Mammary epithelial cell (primary cell): ENCODE measurements at regions of chr18 and their contacts with region 1.

Region 1: DNA sequence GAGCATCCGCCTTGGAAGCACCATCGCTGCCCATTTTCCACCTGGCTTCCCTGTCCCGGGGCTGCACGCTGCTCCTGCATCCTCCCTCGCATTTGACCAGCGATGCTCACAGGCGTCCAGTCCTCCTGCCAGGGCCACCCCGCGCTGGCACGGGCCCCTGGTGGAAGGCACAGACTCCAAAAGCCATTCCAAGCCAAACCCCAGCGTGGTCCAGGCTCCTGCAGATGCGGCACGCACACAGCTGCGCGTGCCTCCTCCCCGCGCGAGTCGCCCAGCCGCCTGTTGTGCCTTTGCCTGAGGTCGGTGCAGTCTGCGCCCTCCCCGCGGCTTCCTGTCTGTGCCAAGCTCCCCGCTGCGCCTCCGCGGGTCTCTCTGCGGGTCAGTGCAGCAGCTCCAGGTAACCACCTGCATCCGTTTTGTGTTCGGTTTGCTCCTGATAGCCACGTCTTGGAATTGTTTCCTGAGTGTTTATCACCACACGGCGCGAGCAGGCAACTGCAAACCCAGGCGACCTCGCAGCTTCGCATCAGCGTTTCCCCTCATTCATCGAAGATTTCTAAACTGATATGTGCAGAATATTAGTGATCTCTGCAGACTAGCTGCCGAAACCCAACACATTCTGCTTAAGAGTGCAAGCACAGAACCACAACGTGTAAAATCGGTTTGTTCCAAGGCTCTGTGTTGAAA is 65.2 kb upstream of the SALL3 start:
- DNase-seq: no peak
- H3K4me3 ChIP-seq: no peak overlapping the region
- H3K27ac ChIP-seq: no peak overlapping the region
- H3K4me1 ChIP-seq: no peaks in the 10 kb centered on the region
- H3K27me3 ChIP-seq: no peaks in the 10 kb centered on the region
- CTCF ChIP-seq: no peak

Region 2: DNA sequence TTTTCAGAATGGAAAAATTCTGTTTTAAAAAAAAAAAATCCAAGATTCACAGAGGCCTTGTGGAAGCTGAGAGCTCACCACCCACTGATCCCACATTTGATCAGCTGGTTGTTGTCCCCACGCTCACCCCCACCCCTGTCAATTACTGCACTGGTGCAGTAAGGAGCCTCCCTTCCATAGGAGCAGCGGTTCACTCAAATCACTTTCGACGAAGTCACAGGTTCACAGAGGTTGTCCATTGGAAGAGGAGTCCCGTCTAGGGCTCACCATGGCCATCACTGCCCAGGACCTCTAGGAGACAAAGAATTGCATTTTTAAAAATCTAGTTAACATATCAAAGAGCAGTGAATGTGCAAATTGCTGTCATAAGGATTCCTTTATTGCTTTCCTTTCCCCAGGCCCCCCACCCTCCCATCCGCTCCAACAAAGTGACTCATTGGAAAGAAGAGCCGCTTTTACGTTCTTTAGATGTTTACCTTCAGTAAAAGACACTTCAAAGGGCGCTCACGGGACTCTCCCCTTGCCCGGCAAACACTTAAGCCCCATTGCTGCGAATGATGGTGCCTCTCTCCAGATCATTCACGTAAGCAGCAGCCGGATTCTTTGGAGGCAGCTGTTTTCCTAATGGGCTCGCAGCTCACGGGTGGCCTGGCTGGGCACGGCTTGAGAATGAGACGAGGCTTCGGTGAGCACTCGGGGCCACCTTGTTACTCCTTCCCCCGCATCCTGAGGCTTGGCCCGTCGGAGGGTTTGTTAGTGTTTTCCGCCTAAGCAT is 100.3 kb before region 1 on chr18:
- CTCF ChIA-PET with region 1: no interaction called
- dilution Hi-C with region 1: no loop called
- in situ Hi-C with region 1: loop called in 1 of 2 experiments (anchors 25 kb)
- intact Hi-C with region 1: no loop called
- DNase-seq: no peak
- H3K4me3 ChIP-seq: no peak overlapping the region
- H3K27ac ChIP-seq: no peak overlapping the region
- H3K4me1 ChIP-seq: no peaks in the 10 kb centered on the region
- H3K27me3 ChIP-seq: no peaks in the 10 kb centered on the region
- CTCF ChIP-seq: no peak